MCF 10A (cell line): ENCODE measurements at regions of chr13 and their contacts with region 1.

Region 1: GRCh38 chr13:114314074-114314912 is at the start of gene CHAMP1:
- DNase-seq: peak; percentile 95
- H3K4me3 Mint-ChIP-seq: peak within 1 kb of the TSS; percentile 87
- H3K27ac Mint-ChIP-seq: peak within 1 kb of the TSS; percentile 96
- H3K4me1 Mint-ChIP-seq: peaks cover 29% of the 10 kb centered on the region
- H3K27me3 Mint-ChIP-seq: no peaks in the 10 kb centered on the region
- CTCF ChIP-seq: no peak
- total RNA-seq, gene CHAMP1: 27.0 and 33.4 TPM in 2 replicates

Region 2: DNA sequence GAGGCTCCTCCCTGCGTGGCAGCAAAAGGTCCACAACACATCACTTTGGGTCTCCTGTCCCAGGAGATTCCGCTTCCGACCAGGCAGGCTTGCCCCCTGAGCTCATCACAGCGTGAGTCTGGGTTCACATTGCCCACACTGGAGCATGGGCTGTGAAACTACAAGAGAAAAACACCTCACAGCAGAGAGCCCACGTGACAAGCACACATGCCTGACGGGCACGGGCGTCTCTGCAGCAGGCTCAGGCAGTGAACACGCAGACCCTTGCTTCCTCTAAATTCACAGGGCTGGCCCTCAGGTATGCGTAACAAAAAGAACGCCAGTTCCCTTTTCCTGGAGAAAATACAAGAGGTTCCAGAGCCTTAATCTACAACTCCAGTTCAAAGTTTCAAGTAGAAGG is 223.8 kb before region 1 on chr13:
- CTCF ChIA-PET with region 1: no interaction called
- POLR2A ChIA-PET with region 1: no interaction called
- intact Hi-C with region 1: no loop called
- DNase-seq: no peak
- H3K4me3 Mint-ChIP-seq: no peak overlapping the region
- H3K27ac Mint-ChIP-seq: no peak overlapping the region
- H3K4me1 Mint-ChIP-seq: no peaks in the 10 kb centered on the region
- H3K27me3 Mint-ChIP-seq: no peaks in the 10 kb centered on the region
- CTCF ChIP-seq: no peak

Region 3: GRCh38 chr13:114222461-114222968 is 91.8 kb before region 1 on chr13:
- CTCF ChIA-PET with region 1: no interaction called
- POLR2A ChIA-PET with region 1: no interaction called
- intact Hi-C with region 1: no loop called
- DNase-seq: no peak
- H3K4me3 Mint-ChIP-seq: no peak overlapping the region
- H3K27ac Mint-ChIP-seq: no peak overlapping the region
- H3K4me1 Mint-ChIP-seq: peaks cover 6% of the 10 kb centered on the region
- H3K27me3 Mint-ChIP-seq: no peaks in the 10 kb centered on the region
- CTCF ChIP-seq: no peak

Region 4: GRCh38 chr13:114234645-114235421 is 79.5 kb before region 1 on chr13 and contains the start of gene CDC16:
- CTCF ChIA-PET with region 1: no interaction called
- POLR2A ChIA-PET with region 1: interaction called, 12 read pairs
- intact Hi-C with region 1: no loop called
- DNase-seq: peak; percentile 92
- H3K4me3 Mint-ChIP-seq: peak within 1 kb of the TSS; percentile 83
- H3K27ac Mint-ChIP-seq: peak within 1 kb of the TSS; percentile 79
- H3K4me1 Mint-ChIP-seq: peaks cover 6% of the 10 kb centered on the region
- H3K27me3 Mint-ChIP-seq: no peaks in the 10 kb centered on the region
- CTCF ChIP-seq: no peak
- total RNA-seq, gene CDC16: 68.6 and 72.4 TPM in 2 replicates

Region 5: GRCh38 chr13:114281351-114282040 is 32.8 kb before region 1 on chr13 and contains the start of gene UPF3A:
- CTCF ChIA-PET with region 1: no interaction called
- POLR2A ChIA-PET with region 1: interaction called, 26 read pairs
- intact Hi-C with region 1: loop called (anchors 2 kb)
- DNase-seq: peak; percentile 94
- H3K4me3 Mint-ChIP-seq: peak within 1 kb of the TSS; percentile 94
- H3K27ac Mint-ChIP-seq: peak within 1 kb of the TSS; percentile 93
- H3K4me1 Mint-ChIP-seq: peaks cover 29% of the 10 kb centered on the region
- H3K27me3 Mint-ChIP-seq: no peaks in the 10 kb centered on the region
- CTCF ChIP-seq: no peak
- total RNA-seq, gene UPF3A: 56.6 and 63.5 TPM in 2 replicates

Region 6: GRCh38 chr13:114325729-114326128 is 11.4 kb after region 1 on chr13:
- CTCF ChIA-PET with region 1: interaction called, 4 read pairs
- POLR2A ChIA-PET with region 1: interaction called, 21 read pairs
- intact Hi-C with region 1: no loop called
- DNase-seq: no peak
- H3K4me3 Mint-ChIP-seq: no peak overlapping the region
- H3K27ac Mint-ChIP-seq: peak overlapping the region; percentile 9
- H3K4me1 Mint-ChIP-seq: peaks cover 6% of the 10 kb centered on the region
- H3K27me3 Mint-ChIP-seq: no peaks in the 10 kb centered on the region
- CTCF ChIP-seq: no peak